MCF 10A (cell line): ENCODE measurements at regions of chr1 and their contacts with region 1.

Region 1: GRCh38 chr1:51661081-51661518 is 44.2 kb downstream of the OSBPL9 start:
- DNase-seq: peak; percentile 89
- H3K4me3 Mint-ChIP-seq: peak overlapping the region; percentile 59
- H3K27ac Mint-ChIP-seq: peak overlapping the region; percentile 87
- H3K4me1 Mint-ChIP-seq: peaks cover 33% of the 10 kb centered on the region
- H3K27me3 Mint-ChIP-seq: no peaks in the 10 kb centered on the region
- CTCF ChIP-seq: no peak

Region 2: GRCh38 chr1:51690285-51690961 is 29.3 kb after region 1 on chr1:
- CTCF ChIA-PET with region 1: interaction called, 3 read pairs
- POLR2A ChIA-PET with region 1: interaction called, 13 read pairs
- intact Hi-C with region 1: no loop called
- DNase-seq: peak; percentile 95
- H3K4me3 Mint-ChIP-seq: peak overlapping the region; percentile 26
- H3K27ac Mint-ChIP-seq: peak overlapping the region; percentile 68
- H3K4me1 Mint-ChIP-seq: peaks cover 51% of the 10 kb centered on the region
- H3K27me3 Mint-ChIP-seq: no peaks in the 10 kb centered on the region
- CTCF ChIP-seq: no peak

Region 3: DNA sequence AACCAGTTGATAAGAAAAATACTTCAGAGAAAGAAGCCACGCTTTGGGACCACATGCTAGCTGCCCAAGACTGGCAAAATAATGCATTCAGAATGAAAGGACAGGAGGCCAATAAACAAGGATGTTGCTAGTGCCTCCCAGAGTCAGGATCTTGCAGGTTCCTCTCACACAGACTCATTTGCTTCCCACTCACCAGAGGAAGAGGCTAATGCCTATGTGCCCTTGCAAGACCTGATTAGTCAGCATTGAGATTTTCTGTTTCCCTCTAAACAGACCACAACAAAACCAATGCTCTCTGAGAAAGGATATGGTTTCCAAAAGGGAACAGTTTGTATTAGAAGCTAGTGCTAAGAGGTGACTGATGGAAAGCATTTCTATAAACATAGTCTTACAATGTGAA is 131.8 kb after region 1 on chr1:
- CTCF ChIA-PET with region 1: no interaction called
- POLR2A ChIA-PET with region 1: no interaction called
- intact Hi-C with region 1: no loop called
- DNase-seq: no peak
- H3K4me3 Mint-ChIP-seq: no peak overlapping the region
- H3K27ac Mint-ChIP-seq: no peak overlapping the region
- H3K4me1 Mint-ChIP-seq: no peaks in the 10 kb centered on the region
- H3K27me3 Mint-ChIP-seq: no peaks in the 10 kb centered on the region
- CTCF ChIP-seq: no peak